WTC11 (cell line): ENCODE measurements at regions of chr6 and their contacts with region 1.

Region 1: GRCh38 chr6:75208298-75209183 is 2.7 kb upstream of the COL12A1 start:
- DNase-seq: peak; percentile 90
- ATAC-seq: peak; percentile 38
- H3K4me3 Mint-ChIP-seq: peak overlapping the region; percentile 85
- H3K27ac Mint-ChIP-seq: no peak overlapping the region
- H3K4me1 Mint-ChIP-seq: peaks cover 79% of the 10 kb centered on the region
- H3K27me3 Mint-ChIP-seq: peaks cover 65% of the 10 kb centered on the region
- CTCF ChIP-seq: peak; percentile 72

Region 2: GRCh38 chr6:73732845-73733675 is 1475.5 kb before region 1 on chr6:
- CTCF ChIA-PET with region 1: interaction called, 11 read pairs
- POLR2A ChIA-PET with region 1: no interaction called
- DNase-seq: peak; percentile 74
- ATAC-seq: peak; percentile 96
- H3K4me3 Mint-ChIP-seq: no peak overlapping the region
- H3K27ac Mint-ChIP-seq: no peak overlapping the region
- H3K4me1 Mint-ChIP-seq: peaks cover 8% of the 10 kb centered on the region
- H3K27me3 Mint-ChIP-seq: no peaks in the 10 kb centered on the region
- CTCF ChIP-seq: peak; percentile 92

Region 3: GRCh38 chr6:73856315-73856714 is 1352.2 kb before region 1 on chr6:
- CTCF ChIA-PET with region 1: interaction called, 12 read pairs
- POLR2A ChIA-PET with region 1: no interaction called
- DNase-seq: no peak
- ATAC-seq: no peak; the same call in none of the 2 replicates
- H3K4me3 Mint-ChIP-seq: no peak overlapping the region
- H3K27ac Mint-ChIP-seq: no peak overlapping the region
- H3K4me1 Mint-ChIP-seq: no peaks in the 10 kb centered on the region
- H3K27me3 Mint-ChIP-seq: no peaks in the 10 kb centered on the region
- CTCF ChIP-seq: no peak

Region 4: DNA sequence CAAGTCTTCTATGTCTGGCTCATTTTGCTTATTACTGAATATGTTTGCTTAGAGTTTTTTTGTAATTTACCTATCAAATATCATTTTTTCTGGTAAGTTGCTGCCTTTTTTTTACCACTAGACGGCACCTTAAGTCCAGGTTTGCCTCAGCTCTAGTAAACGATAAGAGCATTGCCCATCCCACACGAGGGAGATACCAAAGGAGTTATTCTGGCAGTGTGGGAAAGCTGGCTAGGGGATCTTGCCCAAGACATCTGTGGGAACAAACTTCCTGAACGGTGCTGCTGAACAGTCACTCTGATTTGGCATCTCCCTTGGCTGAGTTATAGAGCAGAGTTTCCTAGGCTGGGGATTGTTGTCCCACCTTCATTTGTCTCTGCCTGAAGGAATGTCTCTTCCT is 309.1 kb before region 1 on chr6:
- CTCF ChIA-PET with region 1: interaction called, 23 read pairs
- POLR2A ChIA-PET with region 1: interaction called, 5 read pairs
- DNase-seq: no peak
- ATAC-seq: peak; percentile 57
- H3K4me3 Mint-ChIP-seq: no peak overlapping the region
- H3K27ac Mint-ChIP-seq: no peak overlapping the region
- H3K4me1 Mint-ChIP-seq: no peaks in the 10 kb centered on the region
- H3K27me3 Mint-ChIP-seq: 0 out of 2 replicates have a peak, but pooled peaks cover 4% of the 10 kb centered on the region
- CTCF ChIP-seq: no peak

Region 5: GRCh38 chr6:75115481-75115880 is 93.1 kb before region 1 on chr6:
- CTCF ChIA-PET with region 1: interaction called, 13 read pairs
- POLR2A ChIA-PET with region 1: no interaction called
- DNase-seq: no peak
- ATAC-seq: peak; percentile 41; the same call in 1 of the 2 replicates
- H3K4me3 Mint-ChIP-seq: no peak overlapping the region
- H3K27ac Mint-ChIP-seq: no peak overlapping the region
- H3K4me1 Mint-ChIP-seq: no peaks in the 10 kb centered on the region
- H3K27me3 Mint-ChIP-seq: no peaks in the 10 kb centered on the region
- CTCF ChIP-seq: no peak

Region 6: GRCh38 chr6:75230484-75231325 is 22.2 kb after region 1 on chr6:
- CTCF ChIA-PET with region 1: interaction called, 16 read pairs
- POLR2A ChIA-PET with region 1: no interaction called
- DNase-seq: peak; percentile 41
- ATAC-seq: peak; percentile 85
- H3K4me3 Mint-ChIP-seq: no peak overlapping the region
- H3K27ac Mint-ChIP-seq: no peak overlapping the region
- H3K4me1 Mint-ChIP-seq: peaks cover 43% of the 10 kb centered on the region
- H3K27me3 Mint-ChIP-seq: no peaks in the 10 kb centered on the region
- CTCF ChIP-seq: 0 out of 2 replicates have a peak, but pooled peaks have one; percentile 34

Region 7: GRCh38 chr6:75250552-75250951 is 42.0 kb after region 1 on chr6:
- CTCF ChIA-PET with region 1: no interaction called
- POLR2A ChIA-PET with region 1: no interaction called
- DNase-seq: no peak
- ATAC-seq: no peak
- H3K4me3 Mint-ChIP-seq: no peak overlapping the region
- H3K27ac Mint-ChIP-seq: no peak overlapping the region
- H3K4me1 Mint-ChIP-seq: peaks cover 45% of the 10 kb centered on the region
- H3K27me3 Mint-ChIP-seq: no peaks in the 10 kb centered on the region
- CTCF ChIP-seq: no peak